IMR-90 (cell line): ENCODE measurements at regions of chr11 and their contacts with region 1.

Region 1: DNA sequence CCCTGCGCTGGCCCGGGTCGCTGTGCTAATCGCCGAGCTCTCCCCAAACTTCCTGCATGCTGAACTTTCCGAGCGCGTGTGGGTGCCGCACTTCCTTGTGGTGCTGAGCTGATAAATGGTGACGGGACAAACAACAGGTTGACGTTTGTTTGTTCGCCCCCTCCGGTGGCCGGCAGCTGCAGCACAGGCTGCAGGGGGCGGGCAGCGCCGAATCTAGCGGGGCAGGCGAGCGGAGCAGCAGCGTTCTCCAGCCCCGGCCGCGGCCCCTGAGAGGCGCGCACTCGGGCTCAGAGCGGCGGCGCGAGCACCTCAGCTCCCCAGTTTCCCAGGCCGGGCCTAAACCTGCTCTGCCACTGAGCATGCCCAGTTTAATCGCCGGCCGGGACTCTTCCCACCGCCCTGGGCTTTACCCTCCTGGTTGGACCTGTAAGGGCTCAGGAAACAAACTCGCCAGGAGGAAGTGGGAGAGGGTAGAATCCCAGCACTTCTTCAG is at the start of gene PDGFD:
- DNase-seq: peak; percentile 70
- ATAC-seq: peak; percentile 95
- H3K4me3 ChIP-seq: peak within 1 kb of the TSS; percentile 82
- H3K27ac ChIP-seq: peak within 1 kb of the TSS; percentile 23; the same call in 1 of the 2 replicates
- H3K4me1 ChIP-seq: peaks cover 3% of the 10 kb centered on the region
- H3K27me3 ChIP-seq: no peaks in the 10 kb centered on the region
- CTCF ChIP-seq: peak; percentile 43
- POLR2A ChIP-seq: no peak
- RAD21 ChIP-seq: peak; percentile 29; the same call in 1 of the 2 replicates
- total RNA-seq, gene PDGFD: 3.0 and 3.1 TPM in 2 replicates

Region 2: DNA sequence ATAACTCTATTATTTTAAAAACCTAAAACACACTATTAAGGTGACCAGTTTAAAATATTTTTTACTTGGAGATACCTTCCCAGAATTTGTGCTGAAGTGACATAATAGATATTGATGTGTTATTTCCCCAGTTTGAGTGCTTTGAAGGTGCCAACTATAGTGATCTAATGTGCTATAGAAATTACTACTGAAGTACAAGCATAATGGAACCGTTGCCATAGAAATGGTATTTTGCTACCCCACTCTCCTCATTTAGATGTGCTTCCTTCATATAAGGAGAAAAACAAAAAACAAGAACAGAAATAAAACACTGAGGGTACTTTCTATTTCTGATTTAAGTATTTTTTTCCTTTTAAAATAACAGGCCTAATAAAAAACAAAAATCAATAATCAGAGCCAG is 108.5 kb before region 1 on chr11:
- CTCF ChIA-PET with region 1: no interaction called
- POLR2A ChIA-PET with region 1: no interaction called
- dilution Hi-C with region 1: no loop called
- in situ Hi-C with region 1: no loop called
- intact Hi-C with region 1: loop called (anchors 5 kb)
- DNase-seq: no peak
- ATAC-seq: no peak
- H3K4me3 ChIP-seq: no peak overlapping the region
- H3K27ac ChIP-seq: no peak overlapping the region
- H3K4me1 ChIP-seq: peaks cover 2% of the 10 kb centered on the region; the same call in 1 of the 2 replicates
- H3K27me3 ChIP-seq: no peaks in the 10 kb centered on the region
- CTCF ChIP-seq: no peak
- POLR2A ChIP-seq: no peak
- RAD21 ChIP-seq: no peak